GM12878 (cell line): ENCODE measurements at regions of chr1 and their contacts with region 1.

Region 1: GRCh38 chr1:226121587-226122400 is 59.3 kb downstream of the H3-3A start:
- DNase-seq: no peak
- ATAC-seq: peak; percentile 79
- H3K4me3 ChIP-seq: peak overlapping the region; percentile 81
- H3K27ac ChIP-seq: peak overlapping the region; percentile 77
- H3K4me1 ChIP-seq: peaks cover 28% of the 10 kb centered on the region
- H3K27me3 ChIP-seq: no peaks in the 10 kb centered on the region
- CTCF ChIP-seq: peak; percentile 64 to 80 (median 72); a peak in 5 of 6 replicates
- EP300 ChIP-seq: no peak
- POLR2A ChIP-seq: peak; percentile 71
- RAD21 ChIP-seq: peak; percentile 90

Region 2: DNA sequence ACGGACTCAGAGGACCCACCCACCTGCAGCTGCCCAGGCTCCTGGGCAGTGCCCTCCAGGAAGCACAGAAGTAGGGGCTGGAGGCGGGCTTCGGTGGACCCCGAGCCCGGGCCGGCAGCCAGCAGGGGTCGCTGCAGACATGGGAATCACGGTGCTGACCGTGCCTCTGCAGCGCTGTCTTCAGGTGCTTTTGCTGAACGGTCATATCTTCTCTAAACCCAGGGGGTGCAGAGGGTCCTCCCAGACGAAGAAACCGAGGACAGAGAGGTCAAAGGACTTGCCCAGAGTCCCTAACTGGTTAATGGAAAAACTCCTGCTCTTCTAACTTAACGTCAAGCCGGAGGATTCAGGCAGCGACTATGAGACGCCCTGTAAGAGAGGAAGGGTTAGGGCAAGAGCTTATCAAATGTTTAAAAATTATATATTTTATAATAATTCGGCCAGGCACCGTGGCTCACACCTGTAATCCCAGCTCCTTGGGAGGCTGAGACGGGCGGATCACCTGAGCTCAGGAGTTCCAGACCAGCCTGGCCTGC is 159.3 kb before region 1 on chr1:
- CTCF ChIA-PET with region 1: interaction called, 7 read pairs
- POLR2A ChIA-PET with region 1: no interaction called
- RAD21 ChIA-PET with region 1: interaction called, 3 read pairs
- SMC1A ChIA-PET with region 1: interaction called, 5 read pairs
- in situ Hi-C with region 1: no loop called
- intact Hi-C with region 1: loop called (anchors 1 kb)
- DNase-seq: no peak
- ATAC-seq: peak; percentile 99
- H3K4me3 ChIP-seq: no peak overlapping the region
- H3K27ac ChIP-seq: no peak overlapping the region
- H3K4me1 ChIP-seq: no peaks in the 10 kb centered on the region
- H3K27me3 ChIP-seq: no peaks in the 10 kb centered on the region; a peak in 1 of 4 replicates
- CTCF ChIP-seq: peak; percentile 67 to 85 (median 75)
- EP300 ChIP-seq: no peak
- POLR2A ChIP-seq: no peak
- RAD21 ChIP-seq: peak; percentile 60

Region 3: GRCh38 chr1:225999227-225999911 is 122.4 kb before region 1 on chr1 and contains the start of gene SDE2:
- CTCF ChIA-PET with region 1: interaction called, 8 read pairs
- POLR2A ChIA-PET with region 1: interaction called, 3 read pairs
- RAD21 ChIA-PET with region 1: interaction called, 5 read pairs
- SMC1A ChIA-PET with region 1: interaction called, 5 read pairs
- in situ Hi-C with region 1: no loop called
- intact Hi-C with region 1: loop called (anchors 5 kb)
- DNase-seq: peak; percentile 95
- ATAC-seq: peak; percentile 83
- H3K4me3 ChIP-seq: peak within 1 kb of the TSS; percentile 96
- H3K27ac ChIP-seq: peak within 1 kb of the TSS; percentile 97
- H3K4me1 ChIP-seq: peaks cover 39% of the 10 kb centered on the region
- H3K27me3 ChIP-seq: no peaks in the 10 kb centered on the region
- CTCF ChIP-seq: no peak
- EP300 ChIP-seq: no peak; a peak in 1 of 4 replicates
- POLR2A ChIP-seq: peak; percentile 100
- RAD21 ChIP-seq: no peak
- polyA plus RNA-seq, gene SDE2: 2.7 to 4.3 TPM

Region 4: GRCh38 chr1:226051356-226051755 is 70.4 kb before region 1 on chr1:
- CTCF ChIA-PET with region 1: no interaction called
- POLR2A ChIA-PET with region 1: no interaction called
- RAD21 ChIA-PET with region 1: no interaction called
- SMC1A ChIA-PET with region 1: no interaction called
- in situ Hi-C with region 1: no loop called
- intact Hi-C with region 1: no loop called
- DNase-seq: no peak
- ATAC-seq: no peak
- H3K4me3 ChIP-seq: no peak overlapping the region
- H3K27ac ChIP-seq: no peak overlapping the region
- H3K4me1 ChIP-seq: no peaks in the 10 kb centered on the region
- H3K27me3 ChIP-seq: no peaks in the 10 kb centered on the region
- CTCF ChIP-seq: no peak
- EP300 ChIP-seq: no peak
- POLR2A ChIP-seq: no peak
- RAD21 ChIP-seq: no peak

Region 5: GRCh38 chr1:226135709-226136108 is 13.9 kb after region 1 on chr1:
- CTCF ChIA-PET with region 1: interaction called, 12 read pairs
- POLR2A ChIA-PET with region 1: no interaction called
- RAD21 ChIA-PET with region 1: interaction called, 6 read pairs
- SMC1A ChIA-PET with region 1: interaction called, 4 read pairs
- in situ Hi-C with region 1: no loop called
- intact Hi-C with region 1: no loop called
- DNase-seq: no peak
- ATAC-seq: no peak
- H3K4me3 ChIP-seq: no peak overlapping the region
- H3K27ac ChIP-seq: no peak overlapping the region
- H3K4me1 ChIP-seq: peaks cover 14% of the 10 kb centered on the region
- H3K27me3 ChIP-seq: no peaks in the 10 kb centered on the region
- CTCF ChIP-seq: no peak
- EP300 ChIP-seq: no peak
- POLR2A ChIP-seq: no peak
- RAD21 ChIP-seq: no peak

Region 6: GRCh38 chr1:226162898-226163297 is 41.1 kb after region 1 on chr1:
- CTCF ChIA-PET with region 1: interaction called, 32 read pairs
- POLR2A ChIA-PET with region 1: no interaction called
- RAD21 ChIA-PET with region 1: interaction called, 3 read pairs
- SMC1A ChIA-PET with region 1: interaction called, 3 read pairs
- in situ Hi-C with region 1: no loop called
- intact Hi-C with region 1: loop called (anchors 5 kb)
- DNase-seq: no peak
- ATAC-seq: no peak
- H3K4me3 ChIP-seq: no peak overlapping the region
- H3K27ac ChIP-seq: no peak overlapping the region
- H3K4me1 ChIP-seq: peaks cover 12% of the 10 kb centered on the region
- H3K27me3 ChIP-seq: no peaks in the 10 kb centered on the region
- CTCF ChIP-seq: no peak
- EP300 ChIP-seq: no peak
- POLR2A ChIP-seq: no peak
- RAD21 ChIP-seq: no peak

Region 7: DNA sequence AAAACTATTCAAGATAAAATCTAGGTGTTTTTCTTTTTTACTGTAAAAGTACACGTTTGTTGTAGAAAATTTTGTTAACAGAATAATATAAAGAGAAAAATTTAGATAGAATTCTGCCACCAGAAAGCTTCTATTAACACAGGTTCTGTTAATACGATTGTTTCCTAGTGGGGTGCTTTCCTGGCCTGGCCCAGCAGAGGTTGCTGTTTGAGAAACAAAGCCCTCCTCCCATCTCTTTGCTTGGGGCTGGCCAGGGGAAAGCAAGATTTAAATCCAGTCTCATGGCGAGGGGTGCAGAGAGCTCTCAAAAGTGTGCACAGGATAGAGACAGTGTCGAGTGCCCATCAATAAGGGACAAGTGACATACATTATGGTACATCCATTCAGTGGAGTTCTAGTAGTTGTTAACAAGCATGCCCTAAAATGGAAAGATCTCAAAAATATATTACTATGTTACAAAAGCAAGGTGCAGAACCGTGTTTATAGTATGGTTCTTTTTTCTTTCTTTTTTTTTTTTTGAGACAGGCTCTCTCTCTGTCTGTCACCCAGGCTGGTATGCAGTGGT is 79.3 kb after region 1 on chr1:
- CTCF ChIA-PET with region 1: interaction called, 505 read pairs
- POLR2A ChIA-PET with region 1: interaction called, 19 read pairs
- RAD21 ChIA-PET with region 1: interaction called, 118 read pairs
- SMC1A ChIA-PET with region 1: interaction called, 213 read pairs
- in situ Hi-C with region 1: no loop called
- intact Hi-C with region 1: loop called (anchors 1 kb)
- DNase-seq: no peak
- ATAC-seq: peak; percentile 80
- H3K4me3 ChIP-seq: no peak overlapping the region
- H3K27ac ChIP-seq: no peak overlapping the region
- H3K4me1 ChIP-seq: peaks cover 3% of the 10 kb centered on the region; the same call in 1 of the 2 replicates
- H3K27me3 ChIP-seq: no peaks in the 10 kb centered on the region; a peak in 1 of 4 replicates
- CTCF ChIP-seq: peak; percentile 59 to 67 (median 60)
- EP300 ChIP-seq: no peak
- POLR2A ChIP-seq: no peak
- RAD21 ChIP-seq: peak; percentile 72

Region 8: GRCh38 chr1:226332947-226333346 is 211.2 kb after region 1 on chr1:
- CTCF ChIA-PET with region 1: interaction called, 75 read pairs
- POLR2A ChIA-PET with region 1: interaction called, 6 read pairs
- RAD21 ChIA-PET with region 1: interaction called, 30 read pairs
- SMC1A ChIA-PET with region 1: interaction called, 55 read pairs
- in situ Hi-C with region 1: no loop called
- intact Hi-C with region 1: loop called (anchors 1 kb)
- DNase-seq: no peak
- ATAC-seq: no peak
- H3K4me3 ChIP-seq: peak overlapping the region; percentile 58; the same call in 1 of the 2 replicates
- H3K27ac ChIP-seq: no peak overlapping the region; the same call in 1 of the 2 replicates
- H3K4me1 ChIP-seq: no peaks in the 10 kb centered on the region
- H3K27me3 ChIP-seq: no peaks in the 10 kb centered on the region
- CTCF ChIP-seq: no peak
- EP300 ChIP-seq: no peak
- POLR2A ChIP-seq: no peak
- RAD21 ChIP-seq: no peak